Cardiac septum (tissue), 1 donor: ENCODE measurements at regions of chr20 and their contacts with region 1.

Region 1: DNA sequence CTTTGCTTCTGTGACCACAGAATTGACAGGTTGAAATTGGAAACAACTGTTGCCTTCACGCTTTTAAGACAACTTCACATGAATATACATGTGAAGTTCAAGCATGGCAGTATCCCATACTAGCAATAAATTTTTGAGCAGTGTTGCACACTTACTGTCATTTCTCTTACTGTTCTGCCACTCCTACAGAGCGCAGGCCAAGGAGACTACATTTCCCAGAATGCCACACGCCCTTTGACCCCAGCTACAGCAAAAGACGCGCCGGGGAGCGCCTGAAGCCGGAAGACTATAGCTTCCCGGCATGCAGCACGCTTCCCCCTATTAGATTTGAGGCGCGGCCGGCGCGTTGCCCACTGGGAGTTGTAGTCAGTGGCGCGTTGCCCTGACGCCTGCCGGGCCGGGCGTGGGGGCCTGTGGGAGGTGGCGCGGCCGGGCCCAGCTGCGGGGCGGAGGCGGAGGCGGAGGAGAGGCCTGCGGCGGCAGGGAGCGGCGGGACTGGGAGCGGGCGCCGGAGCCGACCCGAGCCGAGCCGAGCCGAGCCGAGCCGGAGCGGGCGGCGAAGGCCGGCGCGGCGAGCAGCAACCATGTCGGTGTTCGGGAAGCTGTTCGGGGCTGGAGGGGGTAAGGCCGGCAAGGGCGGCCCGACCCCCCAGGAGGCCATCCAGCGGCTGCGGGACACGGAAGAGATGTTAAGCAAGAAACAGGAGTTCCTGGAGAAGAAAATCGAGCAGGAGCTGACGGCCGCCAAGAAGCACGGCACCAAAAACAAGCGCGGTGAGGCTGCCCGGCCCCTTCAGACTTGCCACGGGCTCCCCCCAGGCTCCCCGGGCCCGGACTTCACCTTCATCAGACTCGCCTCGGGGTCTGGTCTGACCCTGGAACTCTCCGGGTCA is at the start of gene CHMP4B:
- DNase-seq: peak; percentile 100
- total RNA-seq, gene CHMP4B: 101 TPM

Region 2: DNA sequence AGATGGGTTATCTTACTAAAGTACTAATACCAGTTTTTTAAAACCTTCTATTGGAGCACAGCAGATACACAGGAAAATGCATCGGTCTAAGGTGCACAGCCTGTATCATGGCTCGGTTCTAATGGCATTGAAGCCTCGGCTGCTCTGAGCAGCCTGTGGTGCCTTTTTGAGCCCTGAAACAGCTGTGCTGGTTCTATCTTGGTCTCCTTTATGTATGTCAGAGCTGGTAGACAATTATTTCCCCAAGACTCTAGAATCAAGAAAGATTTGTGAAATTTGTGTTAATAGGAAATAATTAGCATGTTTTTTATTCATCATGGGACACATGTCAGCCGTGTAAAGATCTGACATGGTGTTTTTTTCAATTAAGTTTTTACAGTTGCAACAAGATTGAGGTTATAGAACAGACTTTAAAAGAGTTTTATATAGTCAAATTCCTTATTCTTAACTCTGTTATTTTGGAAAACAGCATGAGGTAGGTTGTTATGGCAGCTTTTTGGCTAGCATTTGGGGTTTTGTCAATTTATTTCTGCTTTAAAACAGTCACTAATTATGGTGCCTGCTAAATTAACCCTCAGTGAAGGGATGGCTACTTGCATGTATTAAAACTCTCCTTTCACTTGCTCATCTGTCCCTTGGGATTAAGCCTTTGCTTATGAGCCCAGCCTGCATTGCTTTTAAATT is 189.3 kb before region 1 on chr20:
- intact Hi-C with region 1: no loop called
- DNase-seq: no peak

Region 3: DNA sequence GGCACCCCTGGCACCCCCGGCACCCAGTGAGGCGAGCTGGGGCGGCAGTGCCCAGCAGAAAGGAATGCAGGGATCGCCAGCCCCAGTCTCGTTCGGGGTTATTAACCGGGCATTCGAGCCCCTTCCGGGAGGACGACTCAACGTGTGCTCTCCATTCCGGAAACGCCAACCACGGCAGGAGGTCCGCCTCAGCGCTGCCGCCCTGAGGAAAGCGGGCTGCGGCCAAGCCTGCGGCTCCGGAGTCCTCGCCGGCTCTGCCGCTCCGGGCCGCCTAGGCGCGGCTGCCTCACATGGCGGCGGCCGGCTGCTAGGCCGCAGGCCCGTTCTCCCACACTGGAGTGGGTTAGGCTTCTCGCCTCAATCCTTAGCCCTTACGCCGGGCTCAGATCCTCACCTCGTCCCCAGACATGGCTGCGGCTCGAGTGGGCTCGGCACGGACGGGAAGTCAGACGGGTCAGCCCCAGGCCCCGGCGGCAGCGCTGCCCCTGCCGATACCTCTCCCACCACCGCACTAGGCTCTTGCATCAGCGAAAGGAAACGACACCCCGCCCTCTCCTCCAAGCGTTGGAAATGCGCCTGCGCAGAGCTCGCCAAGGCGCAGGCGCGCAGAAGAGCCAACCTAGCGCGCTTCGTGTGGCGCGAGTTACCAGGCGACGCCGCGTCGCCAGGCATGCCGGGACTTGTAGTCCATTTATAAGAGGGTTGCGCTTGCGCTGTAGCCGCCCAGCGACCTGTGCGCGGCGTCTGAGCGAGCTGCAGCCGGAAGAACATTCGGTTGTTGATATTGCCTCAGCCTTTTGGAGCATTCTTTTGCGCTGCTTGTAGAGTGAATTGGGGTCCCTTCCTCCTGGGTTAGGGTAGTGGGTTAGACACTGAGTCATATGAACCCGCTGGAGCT is 300.8 kb after region 1 on chr20 and contains the start of gene EIF2S2:
- intact Hi-C with region 1: loop called (anchors 2 kb)
- DNase-seq: peak; percentile 98
- total RNA-seq, gene EIF2S2: 38.3 TPM